ENCODE measurements at regions of chr10 and their contacts with region 1.

Region 1: DNA sequence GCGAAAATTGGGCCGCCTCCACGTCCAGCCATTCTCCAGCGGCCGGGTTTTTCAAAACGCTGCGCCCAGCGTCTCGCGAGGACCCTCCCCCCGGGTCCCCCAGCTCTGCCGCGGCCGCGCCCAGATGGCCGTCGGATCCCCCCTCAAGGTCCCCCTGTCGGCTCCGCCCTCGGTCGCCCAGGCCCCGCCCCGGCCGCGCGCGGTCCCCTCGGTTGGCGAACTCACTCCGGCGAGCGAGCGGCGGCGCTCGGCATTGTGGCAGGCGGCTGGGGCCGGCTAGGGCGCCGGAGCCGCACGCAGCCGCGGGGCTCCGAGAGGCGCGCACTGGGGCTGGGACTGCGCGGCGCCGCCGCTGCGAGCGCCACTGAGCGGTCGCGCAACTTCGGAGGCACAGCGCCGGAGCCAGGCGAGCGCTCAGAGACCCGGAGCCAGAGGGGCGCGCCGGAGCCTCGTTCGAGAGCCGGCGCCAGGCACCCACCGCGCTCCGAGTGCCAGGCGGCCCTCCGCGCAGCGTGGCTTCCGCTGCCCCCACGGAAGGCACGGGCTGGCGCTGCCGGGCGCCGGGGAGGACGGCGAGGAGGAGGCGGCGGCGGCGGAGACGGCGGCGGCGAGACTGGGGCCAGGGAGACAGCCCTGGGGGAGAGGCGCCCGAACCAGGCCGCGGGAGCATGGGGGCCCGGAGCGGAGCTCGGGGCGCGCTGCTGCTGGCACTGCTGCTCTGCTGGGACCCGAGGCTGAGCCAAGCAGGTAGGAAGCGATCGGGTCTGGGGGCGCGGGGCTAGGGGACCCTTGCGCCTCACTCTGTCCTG is at the start of gene UNC5B:
- DNase-seq: peak; percentile 90
- H3K4me3 ChIP-seq: peak within 1 kb of the TSS; percentile 70 to 81 (median 72)
- H3K27ac ChIP-seq: peak within 1 kb of the TSS; percentile 25
- H3K4me1 ChIP-seq: peaks cover 30% of the 10 kb centered on the region
- H3K27me3 ChIP-seq: peaks cover 19% of the 10 kb centered on the region
- CTCF ChIP-seq: peak in 1 of 2 donors; percentile 9
- total RNA-seq, gene UNC5B: 7.2 to 10.0 TPM

Region 2: DNA sequence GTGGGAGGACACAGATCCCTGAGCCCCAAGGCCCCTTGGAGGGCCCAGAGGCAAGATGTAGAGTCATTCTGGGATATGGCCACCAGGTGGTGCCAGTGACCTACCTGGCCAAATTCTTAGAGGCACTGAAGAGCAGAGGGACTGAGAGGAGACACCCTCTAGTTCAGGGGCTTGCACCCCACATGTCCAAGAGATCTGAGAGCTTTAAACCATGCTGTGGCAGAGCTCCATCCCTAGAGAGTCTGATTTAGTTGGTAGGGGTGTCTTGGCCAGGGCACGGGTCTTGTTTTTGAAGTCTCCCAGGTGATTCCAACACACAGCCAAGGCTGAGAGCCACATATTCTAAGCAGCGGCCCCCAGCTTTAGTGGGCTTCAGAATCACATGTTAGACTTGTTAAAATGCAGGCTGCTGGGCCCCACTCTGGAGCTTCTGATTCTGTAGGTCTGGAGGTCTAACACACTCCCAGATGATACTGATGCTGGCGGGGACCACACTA is 662.5 kb before region 1 on chr10:
- CTCF ChIA-PET with region 1: no interaction called
- dilution Hi-C with region 1: no loop called
- in situ Hi-C with region 1: no loop called
- intact Hi-C with region 1: loop called (anchors 10 kb)
- DNase-seq: peak; percentile 39
- H3K4me3 ChIP-seq: no peak overlapping the region
- H3K27ac ChIP-seq: no peak overlapping the region
- H3K4me1 ChIP-seq: no peaks in the 10 kb centered on the region
- H3K27me3 ChIP-seq: peaks cover 2% of the 10 kb centered on the region
- CTCF ChIP-seq: peak; percentile 82 to 94

Region 3: GRCh38 chr10:70903262-70903921 is 309.1 kb before region 1 on chr10:
- CTCF ChIA-PET with region 1: no interaction called
- dilution Hi-C with region 1: no loop called
- in situ Hi-C with region 1: no loop called
- intact Hi-C with region 1: loop called (anchors 1 kb)
- DNase-seq: peak; percentile 17
- H3K4me3 ChIP-seq: no peak overlapping the region
- H3K27ac ChIP-seq: no peak overlapping the region
- H3K4me1 ChIP-seq: no peaks in the 10 kb centered on the region
- H3K27me3 ChIP-seq: no peaks in the 10 kb centered on the region
- CTCF ChIP-seq: peak; percentile 81 to 92

Region 4: GRCh38 chr10:70931168-70931815 is 281.2 kb before region 1 on chr10:
- CTCF ChIA-PET with region 1: no interaction called
- dilution Hi-C with region 1: no loop called
- in situ Hi-C with region 1: loop called (anchors 10 kb)
- intact Hi-C with region 1: no loop called
- DNase-seq: peak; percentile 79
- H3K4me3 ChIP-seq: no peak overlapping the region
- H3K27ac ChIP-seq: no peak overlapping the region
- H3K4me1 ChIP-seq: peaks cover 17% of the 10 kb centered on the region
- H3K27me3 ChIP-seq: no peaks in the 10 kb centered on the region
- CTCF ChIP-seq: no peak

Region 5: GRCh38 chr10:71075086-71075758 is 137.3 kb before region 1 on chr10:
- CTCF ChIA-PET with region 1: no interaction called
- dilution Hi-C with region 1: no loop called
- in situ Hi-C with region 1: no loop called
- intact Hi-C with region 1: loop called (anchors 10 kb)
- DNase-seq: peak; percentile 77
- H3K4me3 ChIP-seq: no peak overlapping the region
- H3K27ac ChIP-seq: no peak overlapping the region
- H3K4me1 ChIP-seq: peaks cover 29% of the 10 kb centered on the region
- H3K27me3 ChIP-seq: no peaks in the 10 kb centered on the region
- CTCF ChIP-seq: no peak

Region 6: DNA sequence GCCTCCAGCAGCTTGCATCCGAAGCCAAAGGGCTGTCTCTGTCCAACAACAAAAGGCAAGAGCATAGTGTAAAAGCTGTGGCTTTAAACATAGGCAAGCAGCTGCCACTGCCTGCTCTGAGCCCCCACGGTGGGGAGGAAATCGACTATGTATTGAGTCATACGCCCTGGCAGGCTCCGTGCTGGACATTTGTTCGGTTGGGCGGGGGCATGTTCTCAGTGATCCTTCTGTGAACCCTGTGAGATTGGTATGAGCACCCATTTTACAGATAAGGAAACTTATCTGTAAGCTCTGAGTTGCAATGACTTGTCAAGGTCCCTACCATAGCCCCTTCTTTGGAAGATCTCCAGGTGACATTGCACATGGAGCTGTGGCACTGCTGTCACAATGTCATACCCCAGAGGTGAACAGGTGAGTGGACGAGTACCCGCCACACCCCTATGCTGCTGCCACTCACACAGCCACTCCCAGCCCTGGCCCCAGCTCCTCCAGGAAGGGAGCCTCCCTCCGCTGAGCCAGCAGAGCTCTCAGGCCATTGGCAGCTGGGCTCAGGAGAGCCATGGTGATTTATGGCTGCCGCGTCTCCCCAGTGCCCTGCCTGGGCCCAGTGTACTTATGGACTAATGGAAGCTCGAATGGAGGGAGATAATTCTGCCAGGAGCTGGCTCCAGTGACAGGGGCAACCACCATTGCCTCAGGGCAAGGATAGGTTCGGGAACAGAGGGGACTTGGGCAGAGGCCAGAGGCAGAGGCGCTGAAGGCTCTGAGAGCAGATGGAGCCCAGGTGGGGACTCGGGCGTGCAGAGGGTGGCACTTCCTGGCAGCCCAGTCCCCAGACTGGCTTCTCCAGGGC is 43.5 kb after region 1 on chr10:
- CTCF ChIA-PET with region 1: no interaction called
- dilution Hi-C with region 1: no loop called
- in situ Hi-C with region 1: no loop called
- intact Hi-C with region 1: loop called (anchors 2 kb)
- DNase-seq: peak; percentile 64
- H3K4me3 ChIP-seq: no peak overlapping the region
- H3K27ac ChIP-seq: no peak overlapping the region
- H3K4me1 ChIP-seq: peaks cover 36% of the 10 kb centered on the region
- H3K27me3 ChIP-seq: no peaks in the 10 kb centered on the region
- CTCF ChIP-seq: no peak

Region 7: DNA sequence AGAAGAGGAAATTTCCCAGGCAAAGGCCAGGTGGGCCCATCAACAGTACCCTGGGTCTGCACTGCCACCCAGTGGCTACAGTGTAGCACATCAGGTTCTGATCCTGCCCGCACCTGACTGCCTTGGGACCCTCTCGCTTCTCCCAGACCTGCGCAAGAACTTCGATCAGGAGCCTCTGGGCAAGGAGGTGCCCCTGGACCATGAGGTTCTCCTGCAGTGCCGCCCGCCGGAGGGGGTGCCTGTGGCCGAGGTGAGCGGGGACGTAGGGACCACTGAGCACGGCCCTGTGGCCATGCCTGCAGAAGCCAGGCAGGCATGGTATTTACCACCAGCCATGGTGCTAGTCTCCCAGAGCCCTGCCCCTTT is 72.6 kb after region 1 on chr10:
- CTCF ChIA-PET with region 1: interaction called, 10 read pairs
- dilution Hi-C with region 1: no loop called
- in situ Hi-C with region 1: loop called in 1 of 2 experiments (anchors 5 kb)
- intact Hi-C with region 1: loop called (anchors 1 kb)
- DNase-seq: peak; percentile 9
- H3K4me3 ChIP-seq: no peak overlapping the region
- H3K27ac ChIP-seq: no peak overlapping the region
- H3K4me1 ChIP-seq: no peaks in the 10 kb centered on the region
- H3K27me3 ChIP-seq: no peaks in the 10 kb centered on the region
- CTCF ChIP-seq: peak; percentile 64 to 74

Region 8: GRCh38 chr10:71454347-71454746 is 241.8 kb after region 1 on chr10:
- CTCF ChIA-PET with region 1: no interaction called
- dilution Hi-C with region 1: no loop called
- in situ Hi-C with region 1: no loop called
- intact Hi-C with region 1: no loop called
- DNase-seq: no peak
- H3K4me3 ChIP-seq: no peak overlapping the region
- H3K27ac ChIP-seq: no peak overlapping the region
- H3K4me1 ChIP-seq: peaks cover 5% of the 10 kb centered on the region
- H3K27me3 ChIP-seq: peaks cover 2% of the 10 kb centered on the region
- CTCF ChIP-seq: no peak